ENCODE measurements at regions of chr3 and their contacts with region 1.

Region 1: DNA sequence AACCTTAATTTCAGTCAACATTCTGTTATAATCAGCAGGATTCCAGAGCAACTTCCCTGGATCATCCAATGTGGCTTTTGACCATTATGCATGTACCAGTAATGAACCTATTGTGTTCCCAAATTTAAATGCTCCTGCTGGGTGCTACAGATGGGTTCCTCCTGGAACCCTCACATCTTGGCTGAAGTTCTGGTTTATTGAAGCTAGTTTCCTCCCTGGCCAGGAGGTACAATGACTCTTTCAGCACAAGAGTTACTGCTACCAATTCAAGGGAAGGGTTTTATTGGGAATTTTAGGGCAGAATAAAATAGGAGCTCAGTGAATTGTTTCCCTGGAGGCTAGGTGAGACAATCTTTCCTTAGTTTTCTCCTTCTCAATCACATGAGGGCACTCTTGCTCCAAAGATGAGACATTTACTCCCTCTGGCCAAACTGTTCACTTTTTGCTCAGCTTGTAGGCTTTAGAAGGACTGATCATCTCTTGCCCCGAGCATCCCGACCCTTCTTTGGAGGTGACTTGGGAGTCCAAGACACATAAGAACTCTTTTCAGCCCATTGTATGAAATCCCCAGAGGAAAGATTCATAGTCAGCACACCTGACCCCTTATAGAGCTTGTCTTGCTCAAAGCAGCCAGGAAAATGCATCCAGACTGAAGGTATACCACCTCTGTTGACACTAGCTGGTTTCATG is 8.8 kb upstream of the NPHP3 start:
- DNase-seq: peak in 3 of 10 donors; percentile 14 to 52 (median 37)

Region 2: GRCh38 chr3:132773071-132773619 is 42.1 kb after region 1 on chr3:
- intact Hi-C with region 1: no loop called
- DNase-seq: no peak

Region 3: DNA sequence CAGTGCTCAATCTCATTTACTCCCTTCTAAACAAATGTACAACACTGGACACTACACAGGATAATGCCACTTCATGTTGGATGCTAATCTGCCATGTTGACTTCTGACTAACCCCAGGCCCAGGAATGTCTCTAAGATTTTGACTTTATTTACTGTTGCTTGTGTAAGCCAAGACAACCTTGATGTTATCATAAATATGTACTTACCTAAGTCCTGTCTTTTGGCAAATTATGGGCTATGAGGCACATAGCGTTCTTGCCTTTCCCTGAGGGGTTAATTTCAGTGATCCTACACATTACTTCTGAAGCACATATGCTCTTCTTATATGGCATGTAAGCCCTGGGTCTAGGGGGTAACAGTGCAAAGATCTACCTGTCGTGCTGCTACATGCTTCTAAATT is 127.5 kb after region 1 on chr3:
- intact Hi-C with region 1: no loop called
- DNase-seq: no peak

Region 4: DNA sequence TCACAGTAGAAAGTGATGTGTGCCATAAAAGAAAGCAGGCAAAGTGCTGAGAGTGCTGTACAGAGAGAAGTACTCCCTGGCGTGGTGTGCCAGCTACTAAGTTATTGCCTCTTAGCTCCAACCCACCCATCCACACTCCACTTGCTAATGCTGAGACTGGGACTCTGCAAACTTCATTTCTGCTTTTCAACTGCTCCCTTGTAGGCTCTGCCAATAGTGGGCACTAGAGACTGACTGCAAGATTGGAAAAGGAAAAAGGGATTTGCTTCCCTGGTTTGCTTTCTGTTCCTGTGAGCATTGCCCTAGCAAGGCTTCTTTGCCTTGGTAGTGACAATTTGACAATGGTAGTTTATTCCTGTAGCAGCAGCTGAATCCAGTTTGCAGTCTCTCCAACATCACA is 250.7 kb after region 1 on chr3:
- intact Hi-C with region 1: no loop called
- DNase-seq: no peak

Region 5: GRCh38 chr3:133384331-133385027 is 653.4 kb after region 1 on chr3:
- intact Hi-C with region 1: loop called (anchors 1 kb)
- DNase-seq: peak; percentile 56 to 96 (median 78)

Region 6: GRCh38 chr3:133426721-133427120 is 695.7 kb after region 1 on chr3:
- intact Hi-C with region 1: loop called (anchors 1 kb)
- DNase-seq: no peak